Transverse colon (tissue), 4 donors: ENCODE measurements at regions of chr20 and their contacts with region 1.

Region 1: GRCh38 chr20:47317127-47317895 is 39.2 kb downstream of the ZMYND8 start:
- DNase-seq: peak; percentile 76
- H3K4me3 ChIP-seq: no peak overlapping the region
- H3K27ac ChIP-seq: peak overlapping the region; percentile 93 to 97 (median 96)
- H3K4me1 ChIP-seq: peaks cover 61 to 89% (median 71%) of the 10 kb centered on the region in 4 donors
- H3K27me3 ChIP-seq: no peaks in the 10 kb centered on the region
- CTCF ChIP-seq: peak in 1 of 5 experiments; percentile 26
- EP300 ChIP-seq: peak; percentile 99
- POLR2A ChIP-seq: peak; percentile 39

Region 2: GRCh38 chr20:47356526-47357295 is 39.4 kb after region 1 on chr20 and contains the start of gene ZMYND8:
- in situ Hi-C with region 1: loop called in 1 of 4 experiments (anchors 10 kb)
- intact Hi-C with region 1: loop called (anchors 5 kb)
- DNase-seq: peak; percentile 95
- H3K4me3 ChIP-seq: peak within 1 kb of the TSS in 2 of 4 donors; percentile 13 to 43
- H3K27ac ChIP-seq: peak within 1 kb of the TSS; percentile 99 to 100 (median 100)
- H3K4me1 ChIP-seq: peaks cover 91 to 100% (median 96%) of the 10 kb centered on the region in 4 donors
- H3K27me3 ChIP-seq: no peaks in the 10 kb centered on the region
- CTCF ChIP-seq: peak in 1 of 5 experiments; percentile 2
- EP300 ChIP-seq: no peak
- POLR2A ChIP-seq: peak; percentile 32
- total RNA-seq, gene ZMYND8: 41.6 to 79.4 (median 60.7) TPM